Pancreas (tissue), 10 donors: ENCODE measurements at regions of chr17 and their contacts with region 1.

Region 1: GRCh38 chr17:69523244-69523861 is 108.9 kb downstream of the MAP2K6 start:
- DNase-seq: peak in 1 of 6 donors; percentile 41
- ATAC-seq: peak; percentile 59 to 88 (median 82)
- H3K4me3 ChIP-seq: no peak overlapping the region
- H3K27ac ChIP-seq: no peak overlapping the region
- H3K4me1 ChIP-seq: no peaks in the 10 kb centered on the region
- H3K27me3 ChIP-seq: no peaks in the 10 kb centered on the region
- CTCF ChIP-seq: peak; percentile 17 to 56 (median 52)

Region 2: GRCh38 chr17:69331756-69332155 is 191.6 kb before region 1 on chr17:
- intact Hi-C with region 1: loop called in 1 of 3 experiments (anchors 5 kb)
- DNase-seq: no peak
- ATAC-seq: no peak
- H3K4me3 ChIP-seq: no peak overlapping the region
- H3K27ac ChIP-seq: no peak overlapping the region
- H3K4me1 ChIP-seq: no peaks in the 10 kb centered on the region
- H3K27me3 ChIP-seq: no peaks in the 10 kb centered on the region
- CTCF ChIP-seq: no peak

Region 3: DNA sequence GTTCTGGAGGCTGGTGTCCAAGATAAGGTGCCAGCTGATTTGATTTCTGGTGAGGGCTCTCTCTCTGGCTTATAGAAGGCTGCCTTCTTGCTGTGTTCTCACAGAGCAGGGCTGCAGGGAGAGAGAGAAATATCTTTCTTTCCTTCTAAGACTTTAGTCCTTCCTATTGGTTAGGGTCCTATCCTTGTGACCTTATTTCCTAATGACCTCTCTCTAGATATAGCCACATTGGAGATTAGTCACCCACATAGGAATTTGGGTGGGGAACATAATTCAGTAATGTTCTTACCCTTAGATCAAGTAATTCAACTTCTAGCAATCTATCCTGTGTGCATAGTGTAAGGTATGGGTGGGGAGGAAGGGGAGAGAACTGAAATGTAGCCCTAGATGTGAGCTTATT is 178.4 kb before region 1 on chr17:
- intact Hi-C with region 1: loop called in 1 of 3 experiments (anchors 10 kb)
- DNase-seq: no peak
- ATAC-seq: no peak
- H3K4me3 ChIP-seq: no peak overlapping the region
- H3K27ac ChIP-seq: no peak overlapping the region
- H3K4me1 ChIP-seq: peaks cover 0 to 9% (median 0%) of the 10 kb centered on the region in 3 donors
- H3K27me3 ChIP-seq: no peaks in the 10 kb centered on the region
- CTCF ChIP-seq: no peak

Region 4: DNA sequence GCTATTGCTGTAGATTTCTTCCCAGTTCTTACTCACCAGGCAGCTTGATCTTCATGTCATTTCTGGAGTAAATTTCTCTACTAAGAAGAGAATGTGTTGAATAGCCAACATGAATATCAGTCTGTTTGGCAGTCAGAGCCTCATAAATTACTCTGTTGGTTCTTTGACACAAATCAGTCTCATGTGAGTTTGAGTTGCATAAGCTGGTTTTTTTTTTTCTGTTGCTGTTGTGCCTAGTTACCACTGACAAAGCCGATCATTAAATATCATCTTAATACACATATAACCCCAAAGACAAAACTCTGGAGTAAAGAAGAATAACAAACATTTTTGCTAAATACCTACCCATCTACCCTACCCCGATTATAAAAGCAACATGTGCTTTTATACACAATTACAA is 311.1 kb after region 1 on chr17:
- intact Hi-C with region 1: no loop called
- DNase-seq: no peak
- ATAC-seq: no peak
- H3K4me3 ChIP-seq: no peak overlapping the region
- H3K27ac ChIP-seq: no peak overlapping the region
- H3K4me1 ChIP-seq: no peaks in the 10 kb centered on the region
- H3K27me3 ChIP-seq: peaks cover 0 to 4% (median 0%) of the 10 kb centered on the region in 4 donors
- CTCF ChIP-seq: no peak